CD4-positive, alpha-beta memory T cell (primary cell): ENCODE measurements at regions of chr11 and their contacts with region 1.

Region 1: GRCh38 chr11:67353317-67354074 is at the start of gene POLD4:
- DNase-seq: peak; percentile 94 to 96 (median 95)
- H3K4me3 ChIP-seq: peak within 1 kb of the TSS; percentile 86 to 99
- H3K4me3 Mint-ChIP-seq: peak within 1 kb of the TSS; percentile 97 to 100 (median 99)
- H3K27ac ChIP-seq: peak within 1 kb of the TSS; percentile 96
- H3K27ac Mint-ChIP-seq: peak within 1 kb of the TSS; percentile 99 to 100 (median 100)
- H3K4me1 ChIP-seq: peaks cover 51% of the 10 kb centered on the region
- H3K4me1 Mint-ChIP-seq: peaks cover 31 to 68% (median 44%) of the 10 kb centered on the region in 4 donors
- H3K27me3 ChIP-seq: no peaks in the 10 kb centered on the region
- H3K27me3 Mint-ChIP-seq: no peaks in the 10 kb centered on the region
- total RNA-seq, gene POLD4: 87.9 to 91.3 TPM

Region 2: DNA sequence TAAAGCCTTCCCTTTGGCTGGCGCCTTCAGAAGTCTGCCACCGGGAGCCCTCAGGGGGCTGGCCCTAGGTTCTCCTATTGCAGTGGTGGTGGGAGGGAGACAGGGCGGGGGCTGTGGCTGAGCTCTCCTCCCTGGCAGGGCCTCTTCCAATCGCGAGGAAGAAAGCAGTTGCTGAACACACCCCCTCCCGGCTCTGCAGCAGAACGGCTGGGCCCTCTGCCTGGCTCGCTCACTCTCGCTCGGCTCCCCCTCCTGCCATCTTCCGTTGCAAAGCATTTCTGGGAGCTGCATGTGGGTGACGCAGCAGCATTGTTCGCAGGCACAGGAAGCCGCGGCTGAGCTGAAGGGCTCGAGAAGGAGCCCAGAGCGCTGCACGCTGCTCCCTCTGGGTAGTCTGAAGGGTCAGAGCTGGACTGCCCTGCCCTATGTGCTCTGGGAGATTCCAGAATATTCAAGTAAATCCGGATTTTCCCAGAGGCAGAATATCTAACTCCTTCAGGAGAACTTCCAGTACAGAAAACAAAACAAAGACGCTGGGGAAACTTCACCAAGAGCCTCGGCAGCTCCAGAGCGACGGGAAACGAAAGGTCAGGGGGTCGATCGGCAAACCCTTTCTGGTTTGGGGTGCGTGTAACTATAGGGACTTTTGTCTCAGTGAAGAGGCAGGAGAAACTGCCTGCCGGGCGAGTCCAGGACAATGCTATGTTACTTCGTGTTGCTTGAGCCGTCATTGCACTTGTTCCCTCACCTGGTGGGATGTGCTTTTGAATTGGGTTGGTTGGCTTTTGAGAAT is 113.5 kb before region 1 on chr11:
- CTCF ChIA-PET with region 1: interaction called, 3 read pairs
- POLR2A ChIA-PET with region 1: interaction called, 53 read pairs
- intact Hi-C with region 1: no loop called
- DNase-seq: peak; percentile 95 to 100 (median 98)
- H3K4me3 ChIP-seq: peak overlapping the region; percentile 52 to 87
- H3K4me3 Mint-ChIP-seq: peak overlapping the region; percentile 96 to 100 (median 99)
- H3K27ac ChIP-seq: peak overlapping the region; percentile 97
- H3K27ac Mint-ChIP-seq: peak overlapping the region; percentile 96 to 100 (median 100)
- H3K4me1 ChIP-seq: peaks cover 39% of the 10 kb centered on the region
- H3K4me1 Mint-ChIP-seq: peaks cover 39 to 62% (median 48%) of the 10 kb centered on the region in 4 donors
- H3K27me3 ChIP-seq: no peaks in the 10 kb centered on the region
- H3K27me3 Mint-ChIP-seq: no peaks in the 10 kb centered on the region

Region 3: GRCh38 chr11:67303132-67303834 is 50.2 kb before region 1 on chr11 and contains the start of gene SSH3:
- CTCF ChIA-PET with region 1: interaction called, 5 read pairs
- POLR2A ChIA-PET with region 1: interaction called, 12 read pairs
- intact Hi-C with region 1: no loop called
- DNase-seq: peak in 3 of 5 donors; percentile 19 to 42 (median 28)
- H3K4me3 ChIP-seq: peak within 1 kb of the TSS in 1 of 2 donors; percentile 66
- H3K4me3 Mint-ChIP-seq: peak within 1 kb of the TSS; percentile 48 to 80 (median 70)
- H3K27ac ChIP-seq: peak within 1 kb of the TSS; percentile 68
- H3K27ac Mint-ChIP-seq: peak within 1 kb of the TSS in 6 of 7 donors; percentile 47 to 72 (median 64)
- H3K4me1 ChIP-seq: peaks cover 20% of the 10 kb centered on the region
- H3K4me1 Mint-ChIP-seq: peaks cover 7 to 31% (median 14%) of the 10 kb centered on the region in 4 donors
- H3K27me3 ChIP-seq: no peaks in the 10 kb centered on the region
- H3K27me3 Mint-ChIP-seq: no peaks in the 10 kb centered on the region
- total RNA-seq, gene SSH3: 22.5 to 26.3 TPM

Region 4: GRCh38 chr11:67382276-67383136 is 29.0 kb after region 1 on chr11:
- CTCF ChIA-PET with region 1: interaction called, 1,065 read pairs
- POLR2A ChIA-PET with region 1: interaction called, 449 read pairs
- intact Hi-C with region 1: loop called (anchors 1 kb)
- DNase-seq: peak; percentile 79 to 84 (median 82)
- H3K4me3 ChIP-seq: no peak overlapping the region
- H3K4me3 Mint-ChIP-seq: peak overlapping the region in 1 of 8 donors; percentile 37
- H3K27ac ChIP-seq: no peak overlapping the region
- H3K27ac Mint-ChIP-seq: peak overlapping the region in 4 of 7 donors; percentile 47 to 86 (median 68)
- H3K4me1 ChIP-seq: peaks cover 6% of the 10 kb centered on the region
- H3K4me1 Mint-ChIP-seq: peaks cover 2 to 8% (median 6%) of the 10 kb centered on the region in 4 donors
- H3K27me3 ChIP-seq: no peaks in the 10 kb centered on the region
- H3K27me3 Mint-ChIP-seq: peaks cover 0 to 1% of the 10 kb centered on the region in 2 donors

Region 5: DNA sequence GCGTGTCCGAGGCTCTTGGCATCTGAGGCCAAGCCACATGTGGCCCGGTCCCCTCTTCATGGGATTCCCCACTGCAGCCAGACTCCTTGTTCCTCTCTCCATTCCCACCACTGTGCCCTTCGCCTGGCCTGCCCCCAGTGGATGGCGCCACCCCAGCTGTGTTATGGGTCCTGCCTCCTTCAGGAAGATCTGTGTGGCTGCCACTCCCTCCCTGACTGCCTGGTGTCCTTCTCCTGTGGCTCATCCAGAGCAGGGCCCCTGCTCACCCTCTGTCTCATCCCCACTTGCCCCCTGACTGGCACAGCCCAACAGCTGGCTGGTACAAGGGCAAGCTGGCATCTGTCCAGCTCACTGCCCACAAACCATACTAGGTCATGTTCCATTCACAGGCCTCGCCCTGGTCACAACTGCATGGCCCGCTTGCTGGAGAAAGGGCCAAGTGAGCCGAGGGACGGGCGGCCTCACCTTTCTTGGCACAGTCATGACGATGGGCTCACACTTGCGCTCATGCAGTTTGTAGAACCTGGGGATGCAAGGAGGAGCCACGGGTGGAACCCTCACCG is 85.9 kb after region 1 on chr11:
- CTCF ChIA-PET with region 1: interaction called, 3 read pairs
- POLR2A ChIA-PET with region 1: interaction called, 41 read pairs
- intact Hi-C with region 1: no loop called
- DNase-seq: peak in 1 of 5 donors; percentile 34
- H3K4me3 ChIP-seq: peak overlapping the region; percentile 29 to 81
- H3K4me3 Mint-ChIP-seq: peak overlapping the region; percentile 96 to 99 (median 97)
- H3K27ac ChIP-seq: peak overlapping the region; percentile 78
- H3K27ac Mint-ChIP-seq: peak overlapping the region; percentile 92 to 98 (median 96)
- H3K4me1 ChIP-seq: peaks cover 69% of the 10 kb centered on the region
- H3K4me1 Mint-ChIP-seq: peaks cover 35 to 81% (median 53%) of the 10 kb centered on the region in 4 donors
- H3K27me3 ChIP-seq: no peaks in the 10 kb centered on the region
- H3K27me3 Mint-ChIP-seq: no peaks in the 10 kb centered on the region

Region 6: GRCh38 chr11:67561971-67562619 is 208.6 kb after region 1 on chr11:
- CTCF ChIA-PET with region 1: no interaction called
- POLR2A ChIA-PET with region 1: no interaction called
- intact Hi-C with region 1: no loop called
- DNase-seq: no peak
- H3K4me3 ChIP-seq: no peak overlapping the region
- H3K4me3 Mint-ChIP-seq: peak overlapping the region in 2 of 8 donors; percentile 32 to 50
- H3K27ac ChIP-seq: no peak overlapping the region
- H3K27ac Mint-ChIP-seq: peak overlapping the region in 1 of 7 donors; percentile 83
- H3K4me1 ChIP-seq: no peaks in the 10 kb centered on the region
- H3K4me1 Mint-ChIP-seq: peaks cover 0 to 9% (median 4%) of the 10 kb centered on the region in 4 donors
- H3K27me3 ChIP-seq: no peaks in the 10 kb centered on the region
- H3K27me3 Mint-ChIP-seq: peaks cover 2 to 13% of the 10 kb centered on the region in 2 donors

Region 7: GRCh38 chr11:67606492-67607201 is 253.2 kb after region 1 on chr11 and contains the start of gene NDUFV1:
- CTCF ChIA-PET with region 1: no interaction called
- POLR2A ChIA-PET with region 1: no interaction called
- intact Hi-C with region 1: loop called (anchors 2 kb)
- DNase-seq: peak; percentile 94 to 96 (median 94)
- H3K4me3 ChIP-seq: peak within 1 kb of the TSS; percentile 38 to 86
- H3K4me3 Mint-ChIP-seq: peak within 1 kb of the TSS; percentile 86 to 97 (median 92)
- H3K27ac ChIP-seq: peak within 1 kb of the TSS; percentile 83
- H3K27ac Mint-ChIP-seq: peak within 1 kb of the TSS; percentile 76 to 97 (median 93)
- H3K4me1 ChIP-seq: peaks cover 13% of the 10 kb centered on the region
- H3K4me1 Mint-ChIP-seq: peaks cover 4 to 27% (median 9%) of the 10 kb centered on the region in 4 donors
- H3K27me3 ChIP-seq: no peaks in the 10 kb centered on the region
- H3K27me3 Mint-ChIP-seq: peaks cover 2 to 6% of the 10 kb centered on the region in 2 donors
- total RNA-seq, gene NDUFV1: 204 to 212 TPM